ENCODE measurements at regions of chr17 and their contacts with region 1.

Region 1: GRCh38 chr17:51056813-51057510 is 63.7 kb downstream of the SPAG9 start:
- DNase-seq: peak; percentile 84
- H3K4me3 ChIP-seq: no peak overlapping the region
- H3K27ac ChIP-seq: peak overlapping the region; percentile 2
- H3K4me1 ChIP-seq: peaks cover 16% of the 10 kb centered on the region
- H3K27me3 ChIP-seq: no peaks in the 10 kb centered on the region
- CTCF ChIP-seq: peak; percentile 33 to 46
- POLR2A ChIP-seq: no peak

Region 2: DNA sequence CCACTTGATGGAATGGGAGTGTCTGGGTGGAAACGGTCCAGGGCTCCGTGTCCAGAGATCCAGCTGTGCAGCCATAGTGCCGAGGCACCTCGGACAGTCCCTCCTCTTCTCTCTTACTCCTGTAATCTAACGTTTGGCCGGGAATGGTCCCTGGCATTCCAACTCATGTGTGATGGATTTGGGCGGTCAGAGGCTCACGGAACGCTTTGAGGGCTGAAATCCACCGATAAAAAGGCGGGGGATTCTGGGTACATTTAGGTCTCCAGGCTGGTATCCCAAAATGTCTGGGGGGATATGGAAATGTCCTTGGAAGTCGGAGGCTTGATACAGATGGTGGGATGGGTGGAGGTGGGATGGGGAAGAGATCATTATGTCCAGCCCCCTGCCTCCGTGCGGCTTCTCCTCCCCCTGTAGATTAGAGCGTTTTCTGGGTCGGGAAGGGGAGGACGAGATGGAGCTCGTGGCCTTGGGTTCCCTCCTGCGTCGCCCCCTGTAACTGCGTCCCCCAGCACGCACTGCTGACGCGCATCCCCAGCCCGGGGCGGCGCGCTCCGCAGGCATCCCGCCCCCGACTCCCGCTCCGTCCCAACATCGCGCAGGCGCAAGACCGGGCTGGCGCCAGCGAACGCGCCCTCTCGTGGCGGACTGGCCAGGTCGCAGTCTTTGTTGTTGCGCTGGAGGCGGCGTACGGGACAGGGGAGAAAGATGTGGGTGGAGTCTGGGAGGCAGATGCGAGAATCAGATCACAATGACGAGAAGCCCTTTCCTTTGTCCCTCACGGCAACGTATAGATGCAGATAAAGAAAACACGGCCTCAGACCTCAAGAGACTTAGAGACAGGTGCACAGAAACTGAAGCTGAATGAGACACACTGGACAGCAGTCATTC is 895.7 kb before region 1 on chr17:
- CTCF ChIA-PET with region 1: no interaction called
- POLR2A ChIA-PET with region 1: interaction called, 10 read pairs
- dilution Hi-C with region 1: no loop called
- intact Hi-C with region 1: no loop called
- DNase-seq: peak; percentile 93
- H3K4me3 ChIP-seq: peak overlapping the region; percentile 28 to 63 (median 39)
- H3K27ac ChIP-seq: no peak overlapping the region
- H3K4me1 ChIP-seq: peaks cover 6% of the 10 kb centered on the region
- H3K27me3 ChIP-seq: peaks cover 0 to 2% of the 10 kb centered on the region in 2 experiments
- CTCF ChIP-seq: peak; percentile 95 to 97
- POLR2A ChIP-seq: peak; percentile 22

Region 3: DNA sequence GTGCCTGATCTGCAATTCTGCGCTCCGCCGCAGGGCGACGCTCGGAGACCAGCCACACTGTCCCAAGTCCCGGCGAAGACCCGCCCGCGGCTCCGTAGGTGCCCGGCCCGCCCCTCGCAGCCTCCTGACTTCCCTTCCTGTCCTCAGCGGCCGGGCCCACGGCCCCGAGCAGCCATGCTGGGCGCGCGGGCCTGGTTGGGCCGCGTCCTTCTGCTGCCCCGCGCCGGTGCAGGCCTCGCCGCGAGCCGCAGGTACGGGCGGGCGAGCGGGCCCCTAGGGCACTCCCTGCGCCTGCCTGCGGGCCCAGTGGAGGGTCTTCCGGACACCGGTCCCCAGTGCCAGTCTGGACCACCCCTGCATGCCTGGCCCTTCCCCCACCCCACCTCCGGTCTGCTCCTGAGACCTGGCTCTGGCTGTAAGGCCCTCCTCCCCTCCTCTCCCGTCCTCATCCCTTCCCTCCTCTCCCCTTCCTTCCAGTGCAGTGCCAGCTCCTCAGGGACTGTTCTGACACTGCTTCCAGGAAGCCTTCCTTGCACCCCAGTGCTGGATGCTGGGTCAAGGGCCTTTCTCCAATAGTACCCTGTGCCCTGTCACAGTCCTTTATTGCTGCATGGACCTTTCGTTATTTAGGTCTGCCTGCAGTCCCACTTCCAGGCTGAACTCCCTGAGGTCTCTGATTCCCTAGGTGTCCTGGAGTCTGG is 509.8 kb before region 1 on chr17 and contains the start of gene SPATA20:
- CTCF ChIA-PET with region 1: no interaction called
- POLR2A ChIA-PET with region 1: no interaction called
- dilution Hi-C with region 1: no loop called
- intact Hi-C with region 1: no loop called
- DNase-seq: peak; percentile 84
- H3K4me3 ChIP-seq: peak within 1 kb of the TSS; percentile 27 to 58 (median 46)
- H3K27ac ChIP-seq: peak within 1 kb of the TSS; percentile 47
- H3K4me1 ChIP-seq: peaks cover 12% of the 10 kb centered on the region
- H3K27me3 ChIP-seq: no peaks in the 10 kb centered on the region
- CTCF ChIP-seq: peak; percentile 95 to 99
- POLR2A ChIP-seq: peak; percentile 92
- total RNA-seq, gene SPATA20: 31.4 and 42.3 TPM in 2 replicates

Region 4: GRCh38 chr17:51006601-51007000 is 50.4 kb before region 1 on chr17:
- CTCF ChIA-PET with region 1: interaction called, 100 read pairs
- POLR2A ChIA-PET with region 1: no interaction called
- dilution Hi-C with region 1: no loop called
- intact Hi-C with region 1: loop called (anchors 1 kb)
- DNase-seq: peak; percentile 21
- H3K4me3 ChIP-seq: no peak overlapping the region
- H3K27ac ChIP-seq: no peak overlapping the region
- H3K4me1 ChIP-seq: peaks cover 5% of the 10 kb centered on the region
- H3K27me3 ChIP-seq: no peaks in the 10 kb centered on the region
- CTCF ChIP-seq: no peak
- POLR2A ChIP-seq: no peak

Region 5: DNA sequence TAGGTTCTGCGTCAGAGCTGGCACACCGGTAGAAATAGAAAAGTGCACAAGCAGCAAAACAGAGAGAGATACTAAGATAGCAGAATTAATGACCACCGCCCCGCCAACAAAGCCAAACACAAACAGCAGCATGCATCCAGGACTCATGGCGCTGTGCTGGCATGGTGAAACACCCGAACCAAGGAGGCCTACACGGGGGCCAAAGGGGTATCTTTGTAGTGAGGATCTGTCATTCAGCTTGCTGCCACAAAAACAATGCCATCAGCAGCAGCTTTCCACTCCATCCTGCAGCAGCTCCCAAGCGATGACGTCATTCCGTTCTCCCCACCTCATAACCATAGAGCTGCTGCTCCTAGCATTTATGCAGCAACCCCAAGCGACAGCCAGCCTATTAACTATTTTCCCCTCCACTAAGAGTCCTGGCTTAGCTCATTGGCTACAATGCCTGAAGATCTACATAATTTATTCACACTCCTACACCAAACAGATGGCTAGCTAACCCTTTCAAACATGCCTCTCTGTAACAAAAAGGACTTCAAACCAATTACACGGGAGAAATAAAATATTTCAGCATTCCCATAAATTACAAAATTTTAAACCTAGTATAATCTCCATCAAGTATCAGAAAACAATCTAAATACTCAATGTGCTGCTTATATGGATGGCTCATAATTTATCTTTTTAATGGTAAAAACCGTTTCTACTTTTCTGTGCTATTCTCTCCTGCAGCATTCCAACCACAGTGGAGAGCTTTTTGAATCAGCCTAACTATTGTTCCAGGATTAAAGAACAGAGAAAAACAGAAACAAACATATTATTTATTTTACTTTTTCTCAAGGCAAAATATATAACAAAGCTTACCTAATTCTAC is 10.2 kb before region 1 on chr17:
- CTCF ChIA-PET with region 1: interaction called, 46 read pairs
- POLR2A ChIA-PET with region 1: no interaction called
- dilution Hi-C with region 1: no loop called
- intact Hi-C with region 1: no loop called
- DNase-seq: peak; percentile 72
- H3K4me3 ChIP-seq: no peak overlapping the region
- H3K27ac ChIP-seq: no peak overlapping the region
- H3K4me1 ChIP-seq: no peaks in the 10 kb centered on the region
- H3K27me3 ChIP-seq: no peaks in the 10 kb centered on the region
- CTCF ChIP-seq: no peak
- POLR2A ChIP-seq: no peak

Region 6: DNA sequence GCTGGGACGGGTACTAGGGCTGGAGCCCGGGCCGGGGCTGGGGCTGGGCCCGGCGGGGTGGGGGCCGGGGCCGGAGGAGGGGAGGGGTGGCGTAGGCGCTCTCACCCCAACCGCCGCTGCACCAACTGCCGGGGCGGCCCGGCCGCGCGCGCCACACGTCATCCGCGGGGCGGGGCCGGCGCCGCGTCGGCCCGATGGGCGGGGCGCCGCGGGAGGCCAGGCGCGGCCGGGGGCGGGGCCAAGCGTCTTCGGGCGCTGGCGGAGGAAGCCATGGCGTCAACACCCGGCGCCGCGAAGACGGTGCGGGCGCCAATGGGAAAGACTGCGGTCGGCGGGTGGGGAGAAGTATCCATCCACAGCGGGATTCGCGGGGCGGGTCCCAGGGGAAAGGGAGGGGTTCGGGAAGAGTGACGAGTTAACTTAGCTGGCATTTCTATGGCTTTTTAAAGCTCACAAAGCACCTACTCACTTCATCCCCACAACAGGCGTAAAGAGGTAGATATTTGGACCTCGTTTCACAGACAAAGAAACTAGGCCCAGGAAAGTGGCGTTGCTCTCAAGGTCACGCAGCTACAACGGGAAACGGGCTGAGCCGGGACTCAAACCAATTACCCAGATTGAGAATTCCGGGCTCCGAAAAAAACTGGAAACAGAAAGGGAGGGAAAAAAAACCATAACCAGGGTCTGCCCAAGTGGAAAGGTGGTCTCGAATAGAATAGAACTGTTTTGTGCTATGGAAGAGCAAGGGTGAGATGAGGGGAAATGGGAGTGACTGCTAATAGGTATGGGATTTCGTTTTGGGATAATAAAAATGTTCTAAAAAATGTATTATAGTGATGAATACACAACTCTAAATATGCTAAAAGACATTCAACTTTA is 64.0 kb after region 1 on chr17 and contains the start of gene SPAG9:
- CTCF ChIA-PET with region 1: interaction called, 8 read pairs
- POLR2A ChIA-PET with region 1: no interaction called
- dilution Hi-C with region 1: no loop called
- intact Hi-C with region 1: loop called (anchors 5 kb)
- DNase-seq: peak; percentile 97
- H3K4me3 ChIP-seq: peak within 1 kb of the TSS; percentile 96 to 99 (median 96)
- H3K27ac ChIP-seq: peak within 1 kb of the TSS; percentile 100
- H3K4me1 ChIP-seq: peaks cover 31% of the 10 kb centered on the region
- H3K27me3 ChIP-seq: no peaks in the 10 kb centered on the region
- CTCF ChIP-seq: no peak
- POLR2A ChIP-seq: no peak
- total RNA-seq, gene SPAG9: 73.5 and 75.0 TPM in 2 replicates